GM12878 (cell line): ENCODE measurements at regions of chr7 and their contacts with region 1.

Region 1: GRCh38 chr7:65731562-65732035 is 141.3 kb upstream of the VKORC1L1 start:
- DNase-seq: no peak
- ATAC-seq: no peak
- H3K4me3 ChIP-seq: no peak overlapping the region
- H3K27ac ChIP-seq: no peak overlapping the region
- H3K4me1 ChIP-seq: no peaks in the 10 kb centered on the region
- H3K27me3 ChIP-seq: no peaks in the 10 kb centered on the region
- CTCF ChIP-seq: no peak
- EP300 ChIP-seq: no peak
- POLR2A ChIP-seq: no peak
- RAD21 ChIP-seq: no peak

Region 2: DNA sequence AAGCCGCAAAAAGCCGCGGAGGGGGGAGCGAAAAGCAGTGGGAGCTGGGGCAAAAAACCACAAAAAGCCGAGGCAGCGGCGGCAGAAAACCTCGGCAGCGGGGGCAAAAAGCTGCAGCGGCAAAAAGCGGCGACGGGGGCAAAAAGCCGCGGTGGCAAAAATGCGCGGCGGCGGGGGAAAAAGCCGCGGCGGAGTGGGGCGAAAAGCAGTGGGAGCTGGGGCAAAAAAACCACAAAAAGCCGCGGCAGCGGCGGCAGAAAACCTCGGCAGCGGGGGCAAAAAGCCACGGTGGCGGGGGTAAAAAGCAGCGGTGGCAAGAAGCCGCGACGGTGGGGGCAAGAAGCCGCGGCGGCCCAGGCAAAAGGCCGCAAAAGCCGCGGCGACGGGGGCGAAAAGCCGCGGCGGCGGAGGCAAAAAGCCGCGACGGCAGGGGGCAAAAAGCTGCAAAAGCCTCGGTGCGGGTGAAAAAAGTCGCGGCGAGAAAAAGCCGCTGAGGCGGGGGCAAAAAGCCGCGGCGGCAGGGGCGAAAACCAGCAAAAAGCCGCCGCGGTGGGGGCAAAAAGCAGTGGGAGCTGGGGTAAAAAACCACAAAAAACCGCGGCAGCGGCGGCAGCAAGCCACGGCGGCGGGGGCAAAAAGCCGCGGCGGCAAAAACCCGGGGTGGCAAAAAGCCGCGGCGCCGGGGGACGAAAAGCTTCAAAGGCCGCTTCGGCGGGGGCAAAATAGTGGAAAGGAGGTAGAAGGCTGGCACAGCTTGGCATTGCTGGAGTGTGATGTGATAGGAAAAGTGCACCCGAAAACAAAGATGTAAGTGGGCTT is 222.0 kb before region 1 on chr7:
- CTCF ChIA-PET with region 1: no interaction called
- POLR2A ChIA-PET with region 1: no interaction called
- RAD21 ChIA-PET with region 1: no interaction called
- SMC1A ChIA-PET with region 1: no interaction called
- in situ Hi-C with region 1: no loop called
- intact Hi-C with region 1: no loop called
- DNase-seq: no peak
- ATAC-seq: no peak
- H3K4me3 ChIP-seq: no peak overlapping the region
- H3K27ac ChIP-seq: no peak overlapping the region
- H3K4me1 ChIP-seq: no peaks in the 10 kb centered on the region
- H3K27me3 ChIP-seq: no peaks in the 10 kb centered on the region
- CTCF ChIP-seq: no peak
- EP300 ChIP-seq: no peak
- POLR2A ChIP-seq: no peak
- RAD21 ChIP-seq: no peak

Region 3: GRCh38 chr7:65749518-65749917 is 17.9 kb after region 1 on chr7:
- CTCF ChIA-PET with region 1: no interaction called
- POLR2A ChIA-PET with region 1: no interaction called
- RAD21 ChIA-PET with region 1: no interaction called
- SMC1A ChIA-PET with region 1: no interaction called
- in situ Hi-C with region 1: no loop called
- intact Hi-C with region 1: no loop called
- DNase-seq: no peak
- ATAC-seq: no peak
- H3K4me3 ChIP-seq: peak overlapping the region; percentile 92; the same call in 1 of the 2 replicates
- H3K27ac ChIP-seq: no peak overlapping the region
- H3K4me1 ChIP-seq: 0 out of 2 replicates have a peak, but pooled peaks cover 3% of the 10 kb centered on the region
- H3K27me3 ChIP-seq: no peaks in the 10 kb centered on the region
- CTCF ChIP-seq: no peak
- EP300 ChIP-seq: no peak
- POLR2A ChIP-seq: no peak
- RAD21 ChIP-seq: no peak

Region 4: DNA sequence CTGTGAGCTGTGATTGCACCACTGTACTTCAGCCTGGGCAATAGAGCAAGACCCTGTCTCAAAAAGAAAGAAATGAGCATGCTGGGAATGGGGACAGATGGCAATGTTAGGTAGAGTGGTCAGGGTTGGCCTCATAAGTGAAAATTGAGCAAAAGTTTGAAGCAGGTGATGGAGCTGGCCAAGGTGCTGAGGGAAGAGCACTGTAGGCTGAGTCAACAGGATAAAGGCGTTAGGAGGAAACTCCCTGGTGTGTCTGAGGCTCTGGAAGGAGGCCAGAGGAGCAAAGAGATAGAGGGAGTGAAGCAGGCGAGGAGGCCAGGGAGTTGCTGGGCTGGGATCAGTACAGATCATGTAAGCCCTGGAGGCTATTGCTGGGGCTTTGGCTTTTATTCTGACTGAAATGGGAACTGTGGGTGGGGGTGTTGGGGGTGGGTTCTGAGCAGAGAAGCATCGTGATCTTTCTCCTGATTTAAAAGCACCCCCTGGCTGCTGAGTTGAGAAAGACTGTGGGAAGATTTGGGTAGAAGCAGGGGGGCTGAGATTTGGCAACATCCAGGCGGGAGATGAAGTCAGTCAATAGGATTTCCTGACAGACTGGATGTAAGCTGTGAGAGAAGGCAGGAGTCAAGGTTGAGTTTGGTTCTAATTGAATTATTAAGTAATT is 88.8 kb after region 1 on chr7:
- CTCF ChIA-PET with region 1: no interaction called
- POLR2A ChIA-PET with region 1: no interaction called
- RAD21 ChIA-PET with region 1: no interaction called
- SMC1A ChIA-PET with region 1: no interaction called
- in situ Hi-C with region 1: no loop called
- intact Hi-C with region 1: loop called (anchors 5 kb)
- DNase-seq: no peak
- ATAC-seq: no peak; the same call in 2 of the 3 replicates
- H3K4me3 ChIP-seq: no peak overlapping the region
- H3K27ac ChIP-seq: no peak overlapping the region
- H3K4me1 ChIP-seq: no peaks in the 10 kb centered on the region
- H3K27me3 ChIP-seq: no peaks in the 10 kb centered on the region
- CTCF ChIP-seq: peak in 1 of 3 experiments; percentile 27; a peak in 2 of 6 replicates
- EP300 ChIP-seq: no peak
- POLR2A ChIP-seq: no peak
- RAD21 ChIP-seq: peak; percentile 50